Gastrocnemius medialis (tissue), 4 donors: ENCODE measurements at regions of chr12 and their contacts with region 1.

Region 1: GRCh38 chr12:57621497-57622292 is 10.5 kb downstream of the ARHGEF25 start:
- DNase-seq: no peak
- ATAC-seq: peak; percentile 60 to 75
- H3K4me3 ChIP-seq: peak overlapping the region; percentile 37 to 85 (median 56)
- H3K27ac ChIP-seq: no peak overlapping the region
- H3K4me1 ChIP-seq: peaks cover 8 to 14% of the 10 kb centered on the region in 2 donors
- H3K27me3 ChIP-seq: peaks cover 53 to 69% (median 61%) of the 10 kb centered on the region in 3 donors
- CTCF ChIP-seq: peak; percentile 74 to 94 (median 87)
- POLR2A ChIP-seq: no peak

Region 2: DNA sequence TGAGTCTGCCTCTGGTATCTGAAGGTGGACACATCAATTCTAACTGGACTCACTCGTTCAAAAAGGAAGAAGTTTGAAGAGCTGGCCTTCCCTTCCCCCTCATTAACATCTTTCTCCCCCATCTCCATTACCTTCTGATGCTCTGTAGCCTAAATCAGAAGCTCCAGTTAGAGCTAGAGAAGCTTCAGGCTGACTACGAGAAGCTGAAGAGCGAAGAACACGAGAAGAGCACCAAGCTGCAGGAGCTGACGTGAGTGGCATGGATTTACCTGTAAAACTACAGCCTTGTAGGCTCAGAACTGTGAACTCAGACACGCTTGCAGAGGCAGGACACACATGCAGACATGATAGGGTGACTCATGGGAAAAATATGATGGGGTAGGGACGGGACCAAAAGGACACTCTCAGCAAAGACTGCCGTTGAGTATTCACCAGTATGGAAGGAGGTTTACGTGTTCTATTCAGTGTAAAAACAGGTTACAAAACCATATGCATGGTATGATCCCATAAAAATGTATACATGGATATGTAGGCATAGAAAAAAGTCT is 45.0 kb before region 1 on chr12:
- in situ Hi-C with region 1: loop called in 2 of 4 experiments (anchors 5 to 10 kb)
- intact Hi-C with region 1: no loop called
- DNase-seq: no peak
- ATAC-seq: no peak
- H3K4me3 ChIP-seq: no peak overlapping the region
- H3K27ac ChIP-seq: no peak overlapping the region
- H3K4me1 ChIP-seq: no peaks in the 10 kb centered on the region
- H3K27me3 ChIP-seq: no peaks in the 10 kb centered on the region
- CTCF ChIP-seq: no peak
- POLR2A ChIP-seq: no peak